B cell (primary cell): ENCODE measurements at regions of chr6 and their contacts with region 1.

Region 1: GRCh38 chr6:5302995-5303622 is 41.8 kb downstream of the FARS2 start:
- DNase-seq: peak; percentile 79
- ATAC-seq: peak; percentile 85
- H3K4me3 ChIP-seq: peak overlapping the region in 3 of 5 experiments; percentile 1 to 41 (median 22)
- H3K4me3 Mint-ChIP-seq: peak overlapping the region; percentile 79
- H3K27ac ChIP-seq: peak overlapping the region in 1 of 2 donors; percentile 30
- H3K27ac Mint-ChIP-seq: peak overlapping the region; percentile 81
- H3K4me1 ChIP-seq: peaks cover 10 to 18% of the 10 kb centered on the region in 2 donors
- H3K4me1 Mint-ChIP-seq: peaks cover 35% of the 10 kb centered on the region
- H3K27me3 ChIP-seq: no peaks in the 10 kb centered on the region
- H3K27me3 Mint-ChIP-seq: no peaks in the 10 kb centered on the region
- CTCF ChIP-seq: peak; percentile 78

Region 2: DNA sequence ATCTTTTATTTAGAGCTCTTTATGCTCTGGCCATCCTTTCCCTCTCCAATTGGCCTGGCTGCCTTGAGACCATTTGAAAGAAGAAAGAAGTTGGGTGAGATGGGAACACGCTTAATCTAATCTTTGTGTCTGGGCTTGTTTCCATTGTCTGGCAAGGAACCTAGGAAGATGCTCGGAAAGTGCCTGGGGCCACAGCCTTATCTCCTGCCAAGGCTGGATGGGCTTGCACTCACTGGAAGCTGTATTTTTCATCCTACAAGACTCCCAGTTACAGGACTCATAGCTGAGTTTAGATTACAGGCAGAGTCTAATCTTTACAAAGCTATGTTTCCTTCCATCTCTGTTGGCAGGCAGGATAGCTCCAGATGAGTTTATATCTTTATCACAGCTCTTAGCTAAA is 560.0 kb before region 1 on chr6:
- CTCF ChIA-PET with region 1: no interaction called
- POLR2A ChIA-PET with region 1: no interaction called
- intact Hi-C with region 1: no loop called
- DNase-seq: no peak
- ATAC-seq: no peak
- H3K4me3 ChIP-seq: no peak overlapping the region
- H3K4me3 Mint-ChIP-seq: no peak overlapping the region
- H3K27ac ChIP-seq: no peak overlapping the region
- H3K27ac Mint-ChIP-seq: no peak overlapping the region
- H3K4me1 ChIP-seq: no peaks in the 10 kb centered on the region
- H3K4me1 Mint-ChIP-seq: no peaks in the 10 kb centered on the region
- H3K27me3 ChIP-seq: no peaks in the 10 kb centered on the region
- H3K27me3 Mint-ChIP-seq: peaks cover 9% of the 10 kb centered on the region
- CTCF ChIP-seq: no peak

Region 3: DNA sequence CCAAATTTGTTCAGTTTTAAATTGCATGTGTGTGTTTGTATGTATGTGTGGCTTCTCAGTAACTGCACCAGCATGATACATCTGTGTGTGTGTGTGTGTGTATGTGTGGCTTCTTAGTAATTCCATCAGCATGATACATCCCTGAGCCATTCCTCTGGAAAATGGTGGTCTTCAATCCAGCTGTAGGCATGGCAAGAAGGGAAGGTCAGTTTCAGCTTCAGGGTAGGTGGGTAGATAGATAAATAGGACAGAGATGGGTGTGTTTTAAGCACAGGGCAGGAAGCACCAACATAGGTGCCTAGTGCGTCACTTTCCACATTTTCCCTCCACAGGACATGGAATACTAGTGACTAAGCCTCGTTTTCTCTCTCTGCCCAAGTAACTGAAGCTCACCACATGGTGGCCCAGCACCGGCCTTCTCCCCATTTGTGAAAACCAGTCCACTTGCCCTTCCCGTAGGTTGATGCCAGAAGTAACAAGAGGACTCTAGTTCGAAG is 382.1 kb before region 1 on chr6:
- CTCF ChIA-PET with region 1: no interaction called
- POLR2A ChIA-PET with region 1: no interaction called
- intact Hi-C with region 1: no loop called
- DNase-seq: no peak
- ATAC-seq: no peak
- H3K4me3 ChIP-seq: no peak overlapping the region
- H3K4me3 Mint-ChIP-seq: no peak overlapping the region
- H3K27ac ChIP-seq: no peak overlapping the region
- H3K27ac Mint-ChIP-seq: no peak overlapping the region
- H3K4me1 ChIP-seq: no peaks in the 10 kb centered on the region
- H3K4me1 Mint-ChIP-seq: peaks cover 34% of the 10 kb centered on the region
- H3K27me3 ChIP-seq: no peaks in the 10 kb centered on the region
- H3K27me3 Mint-ChIP-seq: no peaks in the 10 kb centered on the region
- CTCF ChIP-seq: no peak

Region 4: DNA sequence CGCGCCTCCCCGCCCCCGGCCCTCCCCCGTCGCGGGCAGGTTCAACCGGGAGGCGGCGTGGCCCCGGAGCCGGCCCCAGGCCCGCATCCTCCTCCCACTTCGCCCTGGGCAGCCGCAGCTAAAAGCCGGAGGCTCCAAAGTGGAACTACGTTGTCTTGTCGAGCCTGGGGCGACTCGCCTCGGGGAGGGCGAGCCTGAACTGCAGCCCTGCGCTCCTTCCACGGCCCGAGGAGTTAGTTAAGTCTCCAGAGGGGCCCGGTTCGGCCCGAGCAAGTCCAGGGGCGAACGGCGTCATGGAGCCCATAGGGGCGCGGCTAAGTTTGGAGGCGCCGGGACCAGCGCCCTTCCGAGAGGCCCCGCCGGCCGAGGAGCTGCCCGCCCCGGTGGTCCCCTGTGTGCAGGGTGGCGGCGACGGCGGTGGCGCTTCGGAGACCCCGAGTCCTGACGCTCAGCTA is 217.9 kb before region 1 on chr6 and contains the start of gene PPP1R3G:
- CTCF ChIA-PET with region 1: no interaction called
- POLR2A ChIA-PET with region 1: no interaction called
- intact Hi-C with region 1: no loop called
- DNase-seq: no peak
- ATAC-seq: peak; percentile 32
- H3K4me3 ChIP-seq: peak within 1 kb of the TSS in 4 of 5 experiments; percentile 40 to 77 (median 58)
- H3K4me3 Mint-ChIP-seq: peak within 1 kb of the TSS; percentile 88
- H3K27ac ChIP-seq: no peak within 1 kb of the TSS
- H3K27ac Mint-ChIP-seq: peak within 1 kb of the TSS; percentile 47
- H3K4me1 ChIP-seq: peaks cover 22 to 32% of the 10 kb centered on the region in 2 donors
- H3K4me1 Mint-ChIP-seq: peaks cover 22% of the 10 kb centered on the region
- H3K27me3 ChIP-seq: peaks cover 0 to 42% (median 10%) of the 10 kb centered on the region in 4 experiments
- H3K27me3 Mint-ChIP-seq: peaks cover 20% of the 10 kb centered on the region
- CTCF ChIP-seq: no peak
- total RNA-seq, gene PPP1R3G: 0.24 and 0.25 TPM in 2 replicates

Region 5: DNA sequence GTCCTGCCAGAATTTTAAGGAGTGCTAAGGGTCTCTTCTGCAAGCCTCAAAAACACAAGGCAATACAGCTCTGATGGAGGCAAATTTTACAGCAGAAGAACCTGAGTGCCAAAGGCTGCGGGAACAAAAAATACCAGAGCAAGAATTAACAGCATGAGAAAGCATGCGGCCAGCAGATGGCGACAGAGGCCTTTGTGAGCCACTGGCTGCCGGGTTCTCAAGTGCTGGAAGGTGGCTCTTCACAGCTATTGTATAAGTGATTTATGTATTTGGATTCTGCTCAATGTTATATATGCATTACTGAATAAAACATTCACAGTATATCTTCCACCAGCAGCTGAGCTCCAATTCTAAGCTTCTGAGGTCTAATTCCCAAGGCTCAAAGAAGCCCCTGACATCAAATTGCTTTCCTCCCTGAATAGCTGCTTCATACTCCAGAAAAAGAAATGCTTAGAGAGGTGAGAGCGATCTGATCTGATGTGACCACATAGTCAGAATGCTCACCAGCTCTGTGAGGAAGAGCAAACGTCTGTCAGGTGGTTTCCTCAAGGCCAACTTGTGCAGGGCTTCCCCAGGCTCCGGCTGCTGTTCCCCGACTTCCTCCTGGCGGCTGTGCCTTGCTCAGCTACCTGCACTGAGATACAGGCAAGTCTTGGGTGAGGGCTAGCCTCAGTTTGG is 159.3 kb before region 1 on chr6:
- CTCF ChIA-PET with region 1: interaction called, 192 read pairs
- POLR2A ChIA-PET with region 1: no interaction called
- intact Hi-C with region 1: no loop called
- DNase-seq: peak; percentile 85
- ATAC-seq: peak; percentile 70
- H3K4me3 ChIP-seq: no peak overlapping the region
- H3K4me3 Mint-ChIP-seq: no peak overlapping the region
- H3K27ac ChIP-seq: no peak overlapping the region
- H3K27ac Mint-ChIP-seq: no peak overlapping the region
- H3K4me1 ChIP-seq: peaks cover 10 to 22% of the 10 kb centered on the region in 2 donors
- H3K4me1 Mint-ChIP-seq: peaks cover 25% of the 10 kb centered on the region
- H3K27me3 ChIP-seq: no peaks in the 10 kb centered on the region
- H3K27me3 Mint-ChIP-seq: no peaks in the 10 kb centered on the region
- CTCF ChIP-seq: peak; percentile 96

Region 6: DNA sequence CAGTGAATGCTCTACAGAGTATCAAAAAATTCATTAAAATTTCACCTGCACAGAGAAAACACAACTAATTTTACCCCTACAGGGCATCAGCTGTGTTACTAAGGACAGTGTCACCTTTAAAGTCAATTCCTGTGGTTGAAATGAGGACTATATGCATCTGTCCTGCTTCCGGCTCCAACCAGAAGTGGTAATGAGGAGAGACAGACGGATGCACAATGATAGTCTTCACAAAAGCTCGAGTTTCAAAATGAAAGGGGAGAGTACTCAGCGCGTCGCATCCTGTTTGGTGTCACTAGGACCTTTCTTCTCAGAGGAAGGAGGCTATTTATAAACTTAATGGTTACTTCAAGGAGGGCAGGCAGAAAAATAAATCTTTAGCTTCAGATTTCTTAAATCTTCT is 128.9 kb before region 1 on chr6:
- CTCF ChIA-PET with region 1: interaction called, 17 read pairs
- POLR2A ChIA-PET with region 1: no interaction called
- intact Hi-C with region 1: no loop called
- DNase-seq: peak; percentile 56
- ATAC-seq: peak; percentile 82
- H3K4me3 ChIP-seq: peak overlapping the region; percentile 13 to 54 (median 28)
- H3K4me3 Mint-ChIP-seq: peak overlapping the region; percentile 81
- H3K27ac ChIP-seq: peak overlapping the region; percentile 67 to 68
- H3K27ac Mint-ChIP-seq: peak overlapping the region; percentile 79
- H3K4me1 ChIP-seq: peaks cover 21 to 31% of the 10 kb centered on the region in 2 donors
- H3K4me1 Mint-ChIP-seq: peaks cover 30% of the 10 kb centered on the region
- H3K27me3 ChIP-seq: no peaks in the 10 kb centered on the region
- H3K27me3 Mint-ChIP-seq: no peaks in the 10 kb centered on the region
- CTCF ChIP-seq: no peak

Region 7: DNA sequence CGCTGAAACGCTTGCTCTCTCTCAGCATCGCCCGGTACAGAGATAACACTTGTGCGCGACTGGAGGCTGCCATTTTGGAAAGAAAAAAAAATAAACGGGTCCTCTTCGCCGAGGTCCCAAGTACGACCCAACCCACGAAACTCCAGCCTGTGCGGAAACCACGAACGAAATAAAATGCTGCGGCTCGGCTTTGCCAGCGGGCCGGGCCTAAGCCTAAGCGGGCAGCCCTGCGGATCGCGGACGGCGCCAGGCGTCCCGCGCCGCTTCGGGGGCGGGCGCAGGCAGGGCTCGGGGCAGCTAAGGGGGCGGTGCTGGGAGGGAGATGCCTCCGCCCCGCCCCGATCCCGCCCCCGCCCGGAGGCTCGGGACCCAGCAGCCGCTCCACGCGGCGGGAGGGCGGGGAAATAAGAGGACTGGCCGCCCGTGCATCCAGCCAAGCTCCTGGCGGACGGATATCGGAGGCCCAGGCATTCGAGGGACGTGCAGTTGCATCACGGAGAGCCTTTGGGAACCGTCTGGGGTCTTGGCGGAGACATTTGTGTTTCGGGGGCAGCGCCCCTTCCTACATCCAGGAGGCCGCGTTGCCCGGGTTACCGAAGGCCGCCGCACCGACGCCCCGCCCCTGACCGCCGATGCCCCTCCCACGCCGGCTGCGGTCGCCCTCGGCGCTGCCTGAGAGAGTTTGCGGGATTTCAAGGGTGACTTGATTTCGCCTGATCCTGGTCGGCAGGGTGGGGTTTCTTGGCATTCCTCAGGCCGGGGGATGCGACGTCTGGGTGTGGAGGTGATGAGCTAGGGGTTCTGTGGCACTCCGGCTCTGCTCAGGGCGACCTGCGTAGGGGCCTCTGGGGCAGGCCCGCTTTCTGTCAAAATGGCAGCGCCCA is 42.2 kb before region 1 on chr6 and contains the starts of genes FARS2 and LYRM4:
- CTCF ChIA-PET with region 1: interaction called, 16 read pairs
- POLR2A ChIA-PET with region 1: interaction called, 11 read pairs
- intact Hi-C with region 1: loop called (anchors 1 kb)
- DNase-seq: peak; percentile 99
- ATAC-seq: peak; percentile 81
- H3K4me3 ChIP-seq: peak within 1 kb of the TSS; percentile 77 to 96 (median 93)
- H3K4me3 Mint-ChIP-seq: peak within 1 kb of the TSS; percentile 92
- H3K27ac ChIP-seq: peak within 1 kb of the TSS; percentile 96 to 97
- H3K27ac Mint-ChIP-seq: peak within 1 kb of the TSS; percentile 99
- H3K4me1 ChIP-seq: peaks cover 15 to 23% of the 10 kb centered on the region in 2 donors
- H3K4me1 Mint-ChIP-seq: peaks cover 24% of the 10 kb centered on the region
- H3K27me3 ChIP-seq: no peaks in the 10 kb centered on the region
- H3K27me3 Mint-ChIP-seq: no peaks in the 10 kb centered on the region
- CTCF ChIP-seq: no peak
- total RNA-seq, gene FARS2: 35.5 TPM in 2 replicates
- total RNA-seq, gene LYRM4: 22.1 and 24.6 TPM in 2 replicates

Region 8: DNA sequence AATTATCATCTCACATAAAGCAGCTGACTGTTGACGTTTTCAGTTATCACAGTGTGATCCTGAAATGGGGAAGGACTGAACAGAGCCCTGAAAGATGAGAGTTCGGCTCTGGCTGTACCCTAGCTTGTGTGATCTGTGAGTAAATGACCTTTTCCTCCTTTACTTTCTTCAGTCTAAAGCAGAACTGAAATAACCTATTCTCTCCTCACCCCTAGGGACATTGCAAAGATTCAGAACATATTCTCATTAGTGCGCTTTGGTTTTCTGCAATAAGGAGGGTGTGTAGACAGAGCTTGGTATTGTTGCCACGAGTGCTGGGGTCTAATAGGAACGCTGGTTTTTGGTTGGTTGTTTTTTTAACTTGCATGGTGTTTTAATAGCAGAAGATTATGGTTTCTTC is 25.1 kb before region 1 on chr6:
- CTCF ChIA-PET with region 1: interaction called, 10 read pairs
- POLR2A ChIA-PET with region 1: no interaction called
- intact Hi-C with region 1: loop called (anchors 2 kb)
- DNase-seq: peak; percentile 39
- ATAC-seq: peak; percentile 86
- H3K4me3 ChIP-seq: peak overlapping the region in 2 of 5 experiments; percentile 1 to 2
- H3K4me3 Mint-ChIP-seq: peak overlapping the region; percentile 90
- H3K27ac ChIP-seq: peak overlapping the region; percentile 8 to 31
- H3K27ac Mint-ChIP-seq: peak overlapping the region; percentile 93
- H3K4me1 ChIP-seq: peaks cover 15 to 20% of the 10 kb centered on the region in 2 donors
- H3K4me1 Mint-ChIP-seq: peaks cover 56% of the 10 kb centered on the region
- H3K27me3 ChIP-seq: no peaks in the 10 kb centered on the region
- H3K27me3 Mint-ChIP-seq: no peaks in the 10 kb centered on the region
- CTCF ChIP-seq: no peak

Region 9: GRCh38 chr6:5315881-5316280 is 12.8 kb after region 1 on chr6:
- CTCF ChIA-PET with region 1: interaction called, 12 read pairs
- POLR2A ChIA-PET with region 1: no interaction called
- intact Hi-C with region 1: no loop called
- DNase-seq: no peak
- ATAC-seq: no peak
- H3K4me3 ChIP-seq: no peak overlapping the region
- H3K4me3 Mint-ChIP-seq: no peak overlapping the region
- H3K27ac ChIP-seq: no peak overlapping the region
- H3K27ac Mint-ChIP-seq: no peak overlapping the region
- H3K4me1 ChIP-seq: peaks cover 10 to 12% of the 10 kb centered on the region in 2 donors
- H3K4me1 Mint-ChIP-seq: peaks cover 50% of the 10 kb centered on the region
- H3K27me3 ChIP-seq: no peaks in the 10 kb centered on the region
- H3K27me3 Mint-ChIP-seq: no peaks in the 10 kb centered on the region
- CTCF ChIP-seq: no peak

Region 10: DNA sequence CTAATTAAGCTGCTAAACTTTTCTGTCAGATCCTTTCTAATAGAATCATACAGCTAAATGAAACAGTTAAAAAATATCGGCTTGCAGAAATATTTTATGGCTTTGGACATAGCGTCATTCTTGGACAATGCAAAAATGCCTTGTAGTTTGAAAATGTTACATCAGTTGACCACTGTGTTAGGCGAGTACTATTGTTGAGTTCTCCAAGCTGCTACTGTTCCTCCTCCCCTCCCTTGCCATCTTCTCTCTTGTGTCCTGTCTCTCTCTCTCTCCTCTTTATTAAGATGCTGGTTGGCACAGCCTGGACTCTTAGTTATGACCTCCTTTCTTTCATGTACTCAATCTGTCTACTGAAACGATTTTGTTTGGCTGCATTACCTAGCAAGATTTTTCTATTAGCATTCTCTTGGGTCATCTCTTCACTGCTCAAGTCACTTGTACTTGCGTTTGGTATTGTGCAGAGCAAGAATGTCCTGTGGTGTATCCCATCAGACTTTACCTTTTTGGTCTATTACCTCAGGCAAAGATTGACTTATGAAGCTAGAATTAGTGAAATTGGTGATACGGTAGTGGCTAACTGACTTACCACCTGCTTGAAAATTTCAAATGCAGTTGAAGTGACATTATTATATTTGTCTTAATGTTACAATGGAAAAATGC is 86.1 kb after region 1 on chr6:
- CTCF ChIA-PET with region 1: no interaction called
- POLR2A ChIA-PET with region 1: no interaction called
- intact Hi-C with region 1: no loop called
- DNase-seq: no peak
- ATAC-seq: no peak
- H3K4me3 ChIP-seq: no peak overlapping the region
- H3K4me3 Mint-ChIP-seq: no peak overlapping the region
- H3K27ac ChIP-seq: no peak overlapping the region
- H3K27ac Mint-ChIP-seq: no peak overlapping the region
- H3K4me1 ChIP-seq: no peaks in the 10 kb centered on the region
- H3K4me1 Mint-ChIP-seq: no peaks in the 10 kb centered on the region
- H3K27me3 ChIP-seq: no peaks in the 10 kb centered on the region
- H3K27me3 Mint-ChIP-seq: no peaks in the 10 kb centered on the region
- CTCF ChIP-seq: no peak